ENCODE measurements at regions of chr18 and their contacts with region 1.

Region 1: GRCh38 chr18:3062798-3063680 is 50.1 kb upstream of the LPIN2 start:
- DNase-seq: peak; percentile 89
- H3K4me3 Mint-ChIP-seq: peak overlapping the region; percentile 4
- H3K27ac Mint-ChIP-seq: no peak overlapping the region
- H3K4me1 Mint-ChIP-seq: peaks cover 64% of the 10 kb centered on the region
- H3K27me3 Mint-ChIP-seq: no peaks in the 10 kb centered on the region

Region 2: DNA sequence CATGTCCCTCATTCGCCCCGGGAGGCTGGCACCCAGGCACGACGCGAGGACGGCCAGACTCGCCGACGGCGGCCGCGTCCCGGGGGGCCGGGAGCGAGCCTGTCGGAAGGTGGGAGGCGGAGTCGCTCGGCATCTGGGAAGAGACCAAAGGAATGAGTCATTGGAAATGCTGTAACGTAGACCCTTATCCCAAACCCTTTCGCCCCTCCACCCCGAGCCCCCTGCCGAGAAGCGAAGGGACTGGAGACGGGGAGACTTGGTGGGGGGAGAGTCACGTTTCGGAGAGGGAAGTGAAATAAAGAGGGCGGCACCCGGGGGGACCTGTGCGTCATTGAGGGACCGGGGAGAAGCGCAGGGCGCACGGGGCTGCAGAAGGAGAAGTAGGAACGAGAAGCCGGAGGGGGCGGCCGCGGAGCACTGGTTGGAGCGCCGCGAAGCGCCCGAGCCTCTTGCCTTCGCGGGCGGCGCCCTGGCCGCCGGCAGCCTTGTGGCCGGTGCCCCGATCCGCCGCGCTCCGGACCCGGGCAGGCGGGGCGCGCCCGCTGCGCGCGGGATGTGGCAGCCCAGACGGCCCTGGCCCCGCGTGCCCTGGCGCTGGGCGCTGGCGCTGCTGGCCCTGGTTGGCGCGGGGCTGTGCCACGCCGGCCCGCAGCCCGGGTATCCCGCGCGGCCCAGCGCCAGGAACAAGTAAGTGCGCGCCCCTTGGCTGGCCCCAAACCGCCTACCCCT is 216.2 kb before region 1 on chr18 and contains the start of gene EMILIN2:
- CTCF ChIA-PET with region 1: no interaction called
- intact Hi-C with region 1: loop called (anchors 5 kb)
- DNase-seq: peak; percentile 64
- H3K4me3 Mint-ChIP-seq: peak within 1 kb of the TSS; percentile 83
- H3K27ac Mint-ChIP-seq: peak within 1 kb of the TSS; percentile 61
- H3K4me1 Mint-ChIP-seq: peaks cover 18% of the 10 kb centered on the region
- H3K27me3 Mint-ChIP-seq: peaks cover 31% of the 10 kb centered on the region
- total RNA-seq, gene EMILIN2: 12.2 to 13.2 TPM

Region 3: DNA sequence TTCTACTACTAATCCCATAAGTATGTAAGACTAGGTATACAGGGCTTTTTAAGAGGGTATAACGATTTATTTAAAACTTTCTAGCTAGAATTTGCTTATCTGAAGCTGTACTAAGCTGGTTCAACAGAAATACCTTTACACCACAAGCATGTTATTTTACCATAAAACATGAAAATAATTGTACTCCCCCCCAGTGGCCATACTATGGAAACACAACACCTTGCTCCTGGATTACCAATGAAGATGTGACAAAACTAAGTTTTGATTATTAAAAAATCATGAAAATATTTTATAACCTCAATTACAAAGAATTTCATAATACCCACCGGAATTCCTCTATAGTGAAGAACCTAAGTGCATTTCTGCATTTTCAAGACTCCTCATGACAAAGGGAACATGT is 77.4 kb before region 1 on chr18:
- CTCF ChIA-PET with region 1: interaction called, 39 read pairs
- intact Hi-C with region 1: loop called (anchors 1 kb)
- DNase-seq: no peak
- H3K4me3 Mint-ChIP-seq: no peak overlapping the region
- H3K27ac Mint-ChIP-seq: no peak overlapping the region
- H3K4me1 Mint-ChIP-seq: peaks cover 80% of the 10 kb centered on the region
- H3K27me3 Mint-ChIP-seq: no peaks in the 10 kb centered on the region

Region 4: DNA sequence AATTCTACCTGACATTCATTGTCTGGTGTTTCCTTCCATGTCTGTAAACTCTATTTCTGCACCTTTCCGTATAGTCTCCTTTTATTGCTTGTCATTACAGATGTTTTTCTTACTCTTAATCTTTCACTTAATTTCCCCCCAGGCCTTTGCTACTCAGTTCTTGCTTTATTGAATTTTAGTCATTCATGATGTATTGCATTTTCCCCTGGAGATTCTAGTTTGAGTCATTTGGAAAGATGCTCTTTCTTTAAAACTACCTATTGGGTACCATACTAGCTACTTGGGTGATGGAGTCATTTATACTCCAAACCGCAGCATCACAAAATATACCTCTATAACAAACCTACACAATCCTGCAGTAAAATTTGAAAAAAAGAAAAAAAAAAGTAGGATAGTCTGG is 22.9 kb before region 1 on chr18:
- CTCF ChIA-PET with region 1: interaction called, 12 read pairs
- intact Hi-C with region 1: loop called (anchors 1 kb)
- DNase-seq: no peak
- H3K4me3 Mint-ChIP-seq: no peak overlapping the region
- H3K27ac Mint-ChIP-seq: no peak overlapping the region
- H3K4me1 Mint-ChIP-seq: peaks cover 23% of the 10 kb centered on the region
- H3K27me3 Mint-ChIP-seq: no peaks in the 10 kb centered on the region

Region 5: DNA sequence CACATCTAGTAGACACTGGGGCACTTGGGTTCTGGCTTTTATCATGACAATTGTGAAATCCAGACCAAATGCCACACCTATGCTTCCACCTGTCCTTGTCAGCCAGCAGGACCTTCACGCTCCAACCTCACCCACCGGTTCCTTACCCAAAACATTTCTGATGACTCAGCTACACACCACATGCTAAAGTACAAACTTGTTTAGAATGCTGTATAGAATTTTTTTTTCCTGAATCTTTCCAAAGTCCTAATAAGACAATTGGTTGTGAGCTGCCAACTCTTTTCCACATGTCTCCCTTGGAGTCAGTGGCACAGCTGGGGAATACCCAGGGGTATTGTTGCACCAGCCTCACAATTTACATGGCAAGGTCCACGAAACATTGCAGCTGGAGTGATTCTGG is 25.4 kb after region 1 on chr18:
- CTCF ChIA-PET with region 1: interaction called, 15 read pairs
- intact Hi-C with region 1: no loop called
- DNase-seq: no peak
- H3K4me3 Mint-ChIP-seq: no peak overlapping the region
- H3K27ac Mint-ChIP-seq: no peak overlapping the region
- H3K4me1 Mint-ChIP-seq: peaks cover 15% of the 10 kb centered on the region
- H3K27me3 Mint-ChIP-seq: no peaks in the 10 kb centered on the region

Region 6: GRCh38 chr18:3604498-3605408 is 541.7 kb after region 1 on chr18:
- CTCF ChIA-PET with region 1: no interaction called
- intact Hi-C with region 1: loop called (anchors 2 kb)
- DNase-seq: peak; percentile 60
- H3K4me3 Mint-ChIP-seq: no peak overlapping the region
- H3K27ac Mint-ChIP-seq: no peak overlapping the region
- H3K4me1 Mint-ChIP-seq: peaks cover 13% of the 10 kb centered on the region
- H3K27me3 Mint-ChIP-seq: no peaks in the 10 kb centered on the region